ENCODE measurements at regions of chr15 and their contacts with region 1.

Region 1: GRCh38 chr15:74768771-74769342 is 13.0 kb upstream of the CSK start:
- H3K4me3 ChIP-seq: no peak overlapping the region
- H3K27ac ChIP-seq: no peak overlapping the region
- H3K4me1 ChIP-seq: no peaks in the 10 kb centered on the region
- CTCF ChIP-seq: peak; percentile 89

Region 2: DNA sequence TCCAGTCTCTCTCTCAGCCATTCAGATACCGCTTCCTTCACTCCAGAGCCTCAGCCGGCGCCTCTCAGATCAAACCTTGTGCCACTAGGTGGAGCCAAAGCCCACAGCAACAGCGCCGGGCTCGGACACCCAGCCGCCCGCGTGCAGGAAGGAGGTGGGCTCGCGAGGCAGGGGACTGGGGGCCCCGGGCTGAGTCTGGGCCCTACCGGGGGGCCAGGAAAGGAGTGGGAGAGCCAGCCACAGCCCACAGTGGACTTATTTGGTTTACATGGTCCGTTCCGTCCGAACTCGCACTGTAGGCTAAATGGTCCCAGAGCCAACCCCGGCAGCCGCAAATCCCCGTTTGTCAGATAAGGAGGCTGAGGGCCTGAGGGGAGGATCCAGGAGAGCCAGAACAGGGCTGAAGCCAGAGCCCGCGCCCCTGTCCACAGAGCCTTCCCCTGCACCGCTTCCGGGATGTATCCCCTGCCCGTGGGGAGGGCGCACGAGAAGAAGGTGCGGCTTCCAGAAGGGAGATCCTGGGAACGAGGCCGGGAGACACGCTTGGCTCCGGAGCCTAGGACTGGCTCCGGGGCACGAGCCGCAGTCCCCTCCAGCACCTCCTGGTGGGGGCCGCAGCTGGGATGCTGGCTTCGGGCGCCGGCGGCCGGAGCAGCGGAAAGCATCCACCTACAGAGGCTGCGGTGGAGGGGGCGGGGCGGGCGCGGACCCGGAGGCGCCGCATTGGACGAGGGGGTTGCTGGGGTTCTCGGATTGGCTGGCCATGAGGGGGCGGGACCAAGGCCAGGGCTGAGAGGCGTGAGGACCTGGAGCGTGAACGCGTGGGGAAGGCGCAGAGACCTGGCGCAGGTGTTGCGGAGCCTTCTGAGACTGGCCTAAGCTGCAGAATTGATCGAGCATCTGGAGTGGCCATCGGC is 394.9 kb before region 1 on chr15:
- CTCF ChIA-PET with region 1: interaction called, 45 read pairs
- POLR2A ChIA-PET with region 1: no interaction called
- H3K4me3 ChIP-seq: peak overlapping the region; percentile 45
- H3K27ac ChIP-seq: peak overlapping the region; percentile 54; the same call in 1 of the 2 replicates
- H3K4me1 ChIP-seq: peaks cover 9% of the 10 kb centered on the region
- CTCF ChIP-seq: peak; percentile 98

Region 3: DNA sequence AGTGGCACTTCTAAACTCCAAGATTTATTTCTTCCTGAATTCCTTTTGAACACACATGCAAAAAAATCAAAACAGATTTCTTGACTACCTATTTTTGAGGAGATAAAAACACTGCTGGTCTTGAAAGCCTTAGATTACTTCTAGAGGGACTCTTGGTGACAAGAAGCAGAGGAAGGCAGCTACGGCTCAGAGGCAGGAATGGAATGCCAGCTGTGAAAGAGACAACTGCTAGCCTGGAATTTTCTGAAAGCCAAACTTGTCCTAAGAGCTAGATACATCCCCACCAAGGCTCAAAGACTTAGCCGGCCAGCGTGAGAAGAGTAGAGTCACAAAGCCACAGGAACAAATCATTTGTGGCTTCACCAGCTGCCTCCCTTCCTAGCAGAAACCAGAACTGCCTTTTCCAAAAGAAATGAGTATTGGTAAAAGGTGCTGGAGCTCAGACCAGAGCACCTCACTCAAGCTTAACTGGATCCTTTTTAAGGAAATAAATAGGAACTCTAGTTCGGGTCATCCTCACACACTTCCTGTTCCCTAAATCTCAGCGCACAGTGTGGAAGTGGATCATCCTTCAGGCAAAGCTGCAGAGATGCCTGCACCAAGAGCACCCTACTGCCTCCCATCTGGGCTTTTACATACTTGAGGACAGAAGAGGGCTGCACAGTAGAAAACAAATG is 120.6 kb before region 1 on chr15:
- CTCF ChIA-PET with region 1: interaction called, 800 read pairs
- POLR2A ChIA-PET with region 1: no interaction called
- H3K4me3 ChIP-seq: no peak overlapping the region
- H3K27ac ChIP-seq: no peak overlapping the region
- H3K4me1 ChIP-seq: peaks cover 9% of the 10 kb centered on the region
- CTCF ChIP-seq: no peak

Region 4: GRCh38 chr15:74725845-74726773 is 42.7 kb before region 1 on chr15:
- CTCF ChIA-PET with region 1: interaction called, 11 read pairs
- POLR2A ChIA-PET with region 1: interaction called, 6 read pairs
- H3K4me3 ChIP-seq: peak overlapping the region; percentile 48
- H3K27ac ChIP-seq: peak overlapping the region; percentile 61; the same call in 1 of the 2 replicates
- H3K4me1 ChIP-seq: no peaks in the 10 kb centered on the region; the same call in 1 of the 2 replicates
- CTCF ChIP-seq: peak; percentile 78; the same call in 1 of the 2 replicates

Region 5: DNA sequence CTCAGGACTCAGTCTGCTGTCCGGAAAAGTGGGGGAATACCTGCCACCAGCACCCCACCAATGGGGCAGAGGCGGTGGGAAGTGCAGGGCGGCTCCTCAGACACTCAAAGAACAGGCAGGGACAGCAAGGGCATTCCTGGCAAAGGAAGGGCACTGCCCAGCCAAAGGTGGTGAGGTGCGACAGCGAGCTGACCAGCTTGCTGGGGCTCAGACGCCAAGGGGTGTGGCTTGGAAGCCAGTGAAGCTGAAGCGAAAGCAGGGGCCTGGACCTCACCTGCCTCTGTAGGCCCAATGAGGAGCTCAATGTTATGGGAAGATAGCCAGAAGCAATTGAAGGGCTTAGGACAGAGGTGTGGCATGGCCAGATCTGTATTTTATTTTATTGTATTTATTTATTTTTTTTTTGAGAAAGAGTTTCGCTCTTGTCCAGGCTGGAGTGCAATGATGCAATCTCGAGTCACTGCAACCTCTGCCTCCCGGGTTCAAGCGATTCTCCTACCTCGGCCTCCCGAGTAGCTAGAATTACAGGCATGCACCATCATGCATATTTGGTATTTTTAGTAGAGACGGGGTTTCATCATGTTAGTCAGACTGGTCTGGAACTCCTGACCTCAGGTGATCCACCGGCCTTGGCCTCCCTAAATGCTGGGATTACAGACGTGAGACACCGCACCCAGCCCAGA is 39.4 kb after region 1 on chr15:
- CTCF ChIA-PET with region 1: interaction called, 65 read pairs
- POLR2A ChIA-PET with region 1: interaction called, 3 read pairs
- H3K4me3 ChIP-seq: no peak overlapping the region
- H3K27ac ChIP-seq: no peak overlapping the region
- H3K4me1 ChIP-seq: no peaks in the 10 kb centered on the region
- CTCF ChIP-seq: no peak

Region 6: GRCh38 chr15:74835307-74835823 is 66.5 kb after region 1 on chr15:
- CTCF ChIA-PET with region 1: interaction called, 63 read pairs
- POLR2A ChIA-PET with region 1: interaction called, 3 read pairs
- H3K4me3 ChIP-seq: no peak overlapping the region
- H3K27ac ChIP-seq: no peak overlapping the region
- H3K4me1 ChIP-seq: no peaks in the 10 kb centered on the region
- CTCF ChIP-seq: peak; percentile 93

Region 7: GRCh38 chr15:74956648-74957300 is 187.9 kb after region 1 on chr15 and contains the start of gene RPP25:
- CTCF ChIA-PET with region 1: interaction called, 223 read pairs
- POLR2A ChIA-PET with region 1: no interaction called
- H3K4me3 ChIP-seq: peak within 1 kb of the TSS; percentile 46
- H3K27ac ChIP-seq: peak within 1 kb of the TSS; percentile 67
- H3K4me1 ChIP-seq: peaks cover 4% of the 10 kb centered on the region; the same call in 1 of the 2 replicates
- CTCF ChIP-seq: no peak